ENCODE measurements at regions of chr1 and their contacts with region 1.

Region 1: DNA sequence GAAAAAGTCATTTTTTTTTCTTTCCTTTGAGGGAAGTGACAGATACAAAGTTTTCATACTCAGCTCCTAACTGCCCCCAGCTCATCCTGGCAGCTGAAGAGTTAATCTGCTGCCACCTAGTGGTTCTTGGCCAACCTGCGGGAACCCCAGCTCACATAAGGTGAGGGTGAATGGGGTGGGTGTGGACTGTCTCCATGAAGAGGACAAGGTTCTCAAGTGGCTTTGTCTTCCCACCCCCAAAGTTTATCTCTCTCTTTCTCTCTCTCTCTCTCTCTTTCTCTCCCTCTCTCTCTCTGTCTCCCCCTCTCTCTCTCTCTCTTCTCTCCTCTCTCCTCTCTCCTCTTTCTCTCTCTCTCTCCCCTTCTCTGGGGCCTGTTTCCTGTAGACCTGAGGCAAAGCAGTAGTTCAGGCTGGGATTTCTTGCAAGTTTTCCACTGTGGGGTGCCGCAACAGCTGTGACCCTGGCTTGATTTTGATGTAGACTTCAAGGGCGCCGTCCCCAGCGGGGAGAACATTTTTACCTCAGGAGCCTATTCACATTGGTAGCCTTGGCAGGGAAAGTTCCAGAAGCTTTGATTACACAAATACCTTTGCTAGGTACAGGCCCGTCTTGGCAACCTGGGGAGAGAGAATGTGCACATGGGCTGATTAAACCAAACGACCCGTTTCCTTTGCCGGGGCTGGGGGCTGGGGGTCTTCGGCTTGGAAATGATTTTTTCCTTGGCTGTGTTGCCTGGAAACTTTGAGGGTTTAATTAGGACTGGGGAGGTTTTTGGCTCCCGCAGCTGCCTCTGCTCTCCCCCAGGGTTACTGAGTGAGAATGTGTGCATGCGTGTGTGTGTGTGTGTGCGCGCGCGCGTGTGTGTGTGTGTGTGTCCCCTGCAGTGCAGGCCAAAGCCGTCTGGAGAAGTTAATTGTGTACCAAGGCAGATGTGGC is 135.9 kb downstream of the TM2D1 start:
- DNase-seq: peak; percentile 62
- H3K4me3 ChIP-seq: no peak overlapping the region
- H3K27ac ChIP-seq: no peak overlapping the region
- H3K4me1 ChIP-seq: no peaks in the 10 kb centered on the region
- CTCF ChIP-seq: peak; percentile 93

Region 2: DNA sequence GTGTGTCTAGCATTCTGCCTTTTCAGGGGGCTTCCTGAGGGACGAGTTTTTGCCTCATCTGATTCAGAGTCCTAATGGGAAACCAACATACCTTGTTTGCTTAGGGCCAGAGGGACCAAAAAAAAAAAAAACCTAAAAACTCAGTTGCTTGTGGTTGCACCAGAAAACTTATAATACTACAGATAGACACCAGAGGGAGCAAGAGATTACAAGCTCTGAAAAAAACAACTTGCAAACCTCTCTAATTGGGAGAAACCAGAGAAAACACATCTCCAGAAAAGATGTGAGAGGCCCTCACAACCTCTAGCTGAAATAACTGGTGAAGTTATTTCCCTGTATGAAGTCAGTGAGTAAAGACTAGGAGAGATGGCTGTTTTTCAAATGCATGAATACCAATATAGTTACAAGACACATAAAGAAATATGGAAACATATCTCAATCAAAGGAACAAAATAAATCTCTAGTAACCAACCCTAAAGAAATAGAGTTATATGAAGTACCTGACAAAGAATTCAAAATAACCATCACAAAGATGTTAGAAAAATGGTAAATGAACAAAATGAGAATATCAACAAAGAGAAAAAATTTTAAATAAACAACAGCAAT is 740.3 kb before region 1 on chr1:
- CTCF ChIA-PET with region 1: no interaction called
- POLR2A ChIA-PET with region 1: no interaction called
- intact Hi-C with region 1: loop called (anchors 5 kb)
- DNase-seq: peak; percentile 22
- H3K4me3 ChIP-seq: no peak overlapping the region
- H3K27ac ChIP-seq: no peak overlapping the region
- H3K4me1 ChIP-seq: no peaks in the 10 kb centered on the region
- CTCF ChIP-seq: peak; percentile 80

Region 3: GRCh38 chr1:60978421-60979357 is 610.3 kb before region 1 on chr1:
- CTCF ChIA-PET with region 1: no interaction called
- POLR2A ChIA-PET with region 1: no interaction called
- intact Hi-C with region 1: loop called (anchors 10 kb)
- DNase-seq: peak; percentile 49
- H3K4me3 ChIP-seq: no peak overlapping the region
- H3K27ac ChIP-seq: no peak overlapping the region
- H3K4me1 ChIP-seq: no peaks in the 10 kb centered on the region
- CTCF ChIP-seq: peak; percentile 85